ENCODE measurements at regions of chr9 and their contacts with region 1.

Region 1: GRCh38 chr9:69121828-69122548 is 52.1 kb upstream of the TJP2 start:
- DNase-seq: peak; percentile 67
- H3K4me3 ChIP-seq: peak overlapping the region; percentile 43 to 83 (median 81)
- H3K27ac ChIP-seq: peak overlapping the region; percentile 57
- H3K4me1 ChIP-seq: peaks cover 12% of the 10 kb centered on the region
- H3K27me3 ChIP-seq: no peaks in the 10 kb centered on the region
- CTCF ChIP-seq: peak in 1 of 2 donors; percentile 15

Region 2: DNA sequence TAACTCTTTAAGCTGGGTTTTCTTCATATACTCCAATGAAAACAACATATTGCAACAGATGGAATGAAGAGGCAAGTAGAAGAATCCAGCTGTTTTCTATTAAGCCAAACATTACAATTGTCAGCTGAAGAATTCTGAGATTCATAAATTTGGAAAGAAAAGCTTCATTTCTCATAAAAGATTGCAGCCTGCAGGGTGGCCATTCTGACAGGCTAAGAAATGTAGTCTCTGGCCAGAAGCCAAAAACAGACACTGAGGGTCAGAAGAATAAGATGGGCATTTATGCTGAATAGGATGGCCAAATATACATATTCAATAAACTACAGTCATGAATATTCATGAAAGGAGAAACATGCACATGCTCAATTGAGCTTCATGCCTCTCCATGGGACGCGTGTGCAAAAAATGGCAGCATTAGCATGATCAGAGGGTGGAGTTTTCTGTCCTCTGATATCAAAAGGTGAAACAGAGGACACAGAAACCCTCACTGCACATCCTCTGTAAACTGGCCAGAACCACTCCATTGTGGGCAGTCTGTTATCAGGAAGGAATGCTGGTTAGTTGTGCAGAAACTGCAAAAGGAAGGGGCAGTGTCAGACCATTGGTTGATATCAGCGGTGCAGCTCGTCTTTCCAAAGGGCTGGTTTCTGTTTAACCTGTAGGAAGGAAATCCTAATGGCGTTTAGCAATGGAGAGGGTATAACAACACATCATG is 36.3 kb before region 1 on chr9:
- CTCF ChIA-PET with region 1: no interaction called
- dilution Hi-C with region 1: loop called (anchors 5 kb)
- in situ Hi-C with region 1: no loop called
- intact Hi-C with region 1: no loop called
- DNase-seq: no peak
- H3K4me3 ChIP-seq: no peak overlapping the region
- H3K27ac ChIP-seq: no peak overlapping the region
- H3K4me1 ChIP-seq: no peaks in the 10 kb centered on the region
- H3K27me3 ChIP-seq: no peaks in the 10 kb centered on the region
- CTCF ChIP-seq: no peak

Region 3: GRCh38 chr9:69174616-69175463 is 52.9 kb after region 1 on chr9:
- CTCF ChIA-PET with region 1: no interaction called
- dilution Hi-C with region 1: loop called (anchors 5 kb)
- in situ Hi-C with region 1: loop called in 1 of 2 experiments (anchors 10 kb)
- intact Hi-C with region 1: loop called (anchors 2 kb)
- DNase-seq: peak; percentile 97
- H3K4me3 ChIP-seq: peak overlapping the region; percentile 69 to 95 (median 76)
- H3K27ac ChIP-seq: peak overlapping the region; percentile 99
- H3K4me1 ChIP-seq: peaks cover 79% of the 10 kb centered on the region
- H3K27me3 ChIP-seq: no peaks in the 10 kb centered on the region
- CTCF ChIP-seq: no peak

Region 4: DNA sequence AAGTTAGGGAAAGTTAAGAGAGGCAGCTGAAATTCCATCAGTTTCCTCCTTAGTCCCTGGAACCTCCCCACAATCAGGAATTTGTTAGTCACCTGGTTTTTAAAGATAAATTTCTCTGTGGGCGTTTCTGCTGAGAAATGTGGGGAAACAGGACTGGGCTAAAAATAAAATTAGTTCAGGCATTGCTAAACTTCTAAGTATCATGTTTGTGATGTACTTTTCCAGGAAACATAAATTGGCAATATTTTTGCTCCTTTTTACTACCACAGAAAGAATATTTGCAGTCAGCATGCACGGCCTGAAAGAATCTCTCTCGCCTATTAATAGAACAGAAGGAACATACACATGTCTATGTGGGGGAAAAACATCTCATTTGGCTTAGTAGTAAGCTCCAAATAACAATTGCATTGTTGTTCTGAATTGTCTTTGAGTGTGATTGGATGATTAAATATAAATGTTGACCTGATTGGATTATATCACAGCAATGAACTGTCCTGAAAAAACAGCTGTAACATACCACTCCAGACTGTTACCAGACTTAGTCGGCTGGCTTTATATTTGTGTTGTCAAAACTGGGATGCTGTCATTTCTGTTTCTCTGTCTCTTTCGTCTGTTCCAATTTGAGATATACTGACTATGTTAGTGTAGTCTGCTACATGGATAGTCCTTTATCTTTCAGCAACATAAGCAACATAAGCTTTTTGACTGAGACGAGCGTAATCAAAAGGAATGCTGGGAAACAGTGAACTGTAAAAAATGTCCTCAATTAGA is 65.0 kb after region 1 on chr9:
- CTCF ChIA-PET with region 1: no interaction called
- dilution Hi-C with region 1: no loop called
- in situ Hi-C with region 1: no loop called
- intact Hi-C with region 1: loop called (anchors 2 kb)
- DNase-seq: peak; percentile 62
- H3K4me3 ChIP-seq: no peak overlapping the region
- H3K27ac ChIP-seq: peak overlapping the region; percentile 75
- H3K4me1 ChIP-seq: peaks cover 24% of the 10 kb centered on the region
- H3K27me3 ChIP-seq: no peaks in the 10 kb centered on the region
- CTCF ChIP-seq: no peak

Region 5: DNA sequence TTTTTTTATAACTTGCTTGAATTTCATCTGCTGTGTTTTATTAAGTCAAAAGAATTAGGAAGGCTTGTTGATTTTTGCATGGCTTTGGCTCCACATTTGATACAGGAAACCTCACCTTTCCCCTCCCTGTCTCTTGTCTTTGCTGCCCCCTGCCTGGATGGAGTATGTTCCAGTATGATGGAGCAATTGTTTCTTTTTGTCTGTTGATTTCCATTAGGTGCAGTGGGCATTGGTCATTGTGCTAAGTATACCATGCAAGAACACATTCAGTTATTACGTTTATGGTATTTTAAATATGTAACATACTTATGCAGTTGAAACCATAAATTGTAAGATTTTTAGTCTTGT is 71.7 kb after region 1 on chr9:
- CTCF ChIA-PET with region 1: no interaction called
- dilution Hi-C with region 1: no loop called
- in situ Hi-C with region 1: no loop called
- intact Hi-C with region 1: loop called (anchors 1 kb)
- DNase-seq: no peak
- H3K4me3 ChIP-seq: no peak overlapping the region
- H3K27ac ChIP-seq: no peak overlapping the region
- H3K4me1 ChIP-seq: no peaks in the 10 kb centered on the region
- H3K27me3 ChIP-seq: no peaks in the 10 kb centered on the region
- CTCF ChIP-seq: peak in 1 of 2 donors; percentile 25

Region 6: DNA sequence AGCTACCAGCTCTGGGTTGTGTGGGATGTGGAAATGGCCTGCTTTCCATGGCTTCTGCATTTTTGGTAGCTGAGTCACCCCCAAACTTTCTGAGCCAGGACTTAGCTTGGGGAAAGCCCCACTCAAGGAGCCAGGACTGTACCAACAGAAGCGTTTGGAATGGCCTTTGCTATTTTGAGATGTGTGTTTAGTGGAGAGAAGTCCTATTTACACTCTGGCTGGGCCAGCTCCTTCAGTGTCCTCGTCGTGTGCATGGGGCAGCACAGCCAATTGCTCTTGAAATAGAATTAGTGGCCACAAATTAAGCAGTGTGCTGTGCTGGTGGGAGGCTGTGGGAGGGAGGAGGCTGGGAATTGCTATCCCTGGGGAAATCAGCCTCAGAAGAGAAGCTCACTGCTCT is 254.7 kb after region 1 on chr9:
- CTCF ChIA-PET with region 1: no interaction called
- dilution Hi-C with region 1: no loop called
- in situ Hi-C with region 1: no loop called
- intact Hi-C with region 1: no loop called
- DNase-seq: peak; percentile 83
- H3K4me3 ChIP-seq: no peak overlapping the region
- H3K27ac ChIP-seq: no peak overlapping the region
- H3K4me1 ChIP-seq: peaks cover 46% of the 10 kb centered on the region
- H3K27me3 ChIP-seq: no peaks in the 10 kb centered on the region
- CTCF ChIP-seq: no peak